BJ (cell line): ENCODE measurements at regions of chr5 and their contacts with region 1.

Region 1: DNA sequence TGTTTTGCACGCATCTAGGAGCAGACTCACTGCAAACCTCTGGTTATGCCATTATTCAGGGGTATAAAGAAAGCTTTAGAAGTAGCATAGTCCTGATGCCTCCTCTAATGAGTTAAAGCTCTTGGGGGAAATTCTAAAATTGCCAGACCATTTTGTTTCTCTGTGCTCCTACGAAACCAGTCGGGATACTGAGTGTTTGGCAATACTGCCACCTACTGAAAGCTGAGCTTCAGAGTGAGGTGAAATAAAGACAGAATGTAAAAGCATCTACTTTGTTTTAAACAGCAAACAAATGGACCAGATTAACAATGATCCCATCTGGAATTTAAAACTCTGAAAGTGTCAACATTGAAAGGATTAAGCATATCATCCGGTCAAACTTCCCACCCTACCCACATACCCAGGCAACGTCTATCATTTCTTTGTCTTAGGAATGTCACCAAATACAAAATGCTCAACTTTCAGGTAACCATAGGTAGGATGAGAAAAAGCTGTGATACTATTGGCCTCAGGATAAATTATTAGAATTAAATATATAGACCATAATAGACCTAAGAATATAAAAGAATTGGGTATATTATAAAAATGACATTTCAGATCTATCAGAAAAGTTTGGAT is 77.8 kb upstream of the SHISAL2B start:
- DNase-seq: no peak
- H3K4me3 ChIP-seq: no peak overlapping the region
- H3K27me3 ChIP-seq: peaks cover 4% of the 10 kb centered on the region
- CTCF ChIP-seq: peak; percentile 82

Region 2: DNA sequence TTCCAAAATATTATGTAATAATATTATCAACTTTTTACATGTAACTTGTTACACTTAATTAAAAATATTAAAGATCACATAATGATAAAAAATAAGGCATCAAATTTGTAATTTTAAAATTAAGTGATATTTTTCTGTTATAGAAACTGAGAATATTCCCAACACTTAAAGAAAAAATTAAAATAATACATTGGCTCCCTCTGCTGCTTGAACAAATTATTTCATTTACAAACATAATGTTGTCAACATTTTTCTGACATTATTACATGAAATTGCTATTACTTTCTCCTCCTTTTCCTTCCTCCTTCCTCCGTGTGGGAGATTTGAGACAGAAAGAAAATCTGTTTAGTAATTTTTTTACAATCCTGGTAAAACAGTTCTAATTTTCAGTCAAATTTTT is 404.5 kb before region 1 on chr5:
- CTCF ChIA-PET with region 1: interaction called, 19 read pairs
- POLR2A ChIA-PET with region 1: no interaction called
- DNase-seq: no peak
- H3K4me3 ChIP-seq: no peak overlapping the region
- H3K27me3 ChIP-seq: no peaks in the 10 kb centered on the region
- CTCF ChIP-seq: no peak

Region 3: GRCh38 chr5:64229163-64229774 is 383.2 kb before region 1 on chr5:
- CTCF ChIA-PET with region 1: interaction called, 138 read pairs
- POLR2A ChIA-PET with region 1: no interaction called
- DNase-seq: no peak
- H3K4me3 ChIP-seq: no peak overlapping the region
- H3K27me3 ChIP-seq: no peaks in the 10 kb centered on the region
- CTCF ChIP-seq: peak; percentile 56

Region 4: GRCh38 chr5:64622991-64623390 is 10.5 kb after region 1 on chr5:
- CTCF ChIA-PET with region 1: interaction called, 20 read pairs
- POLR2A ChIA-PET with region 1: no interaction called
- DNase-seq: no peak
- H3K4me3 ChIP-seq: no peak overlapping the region
- H3K27me3 ChIP-seq: peaks cover 2% of the 10 kb centered on the region
- CTCF ChIP-seq: no peak

Region 5: DNA sequence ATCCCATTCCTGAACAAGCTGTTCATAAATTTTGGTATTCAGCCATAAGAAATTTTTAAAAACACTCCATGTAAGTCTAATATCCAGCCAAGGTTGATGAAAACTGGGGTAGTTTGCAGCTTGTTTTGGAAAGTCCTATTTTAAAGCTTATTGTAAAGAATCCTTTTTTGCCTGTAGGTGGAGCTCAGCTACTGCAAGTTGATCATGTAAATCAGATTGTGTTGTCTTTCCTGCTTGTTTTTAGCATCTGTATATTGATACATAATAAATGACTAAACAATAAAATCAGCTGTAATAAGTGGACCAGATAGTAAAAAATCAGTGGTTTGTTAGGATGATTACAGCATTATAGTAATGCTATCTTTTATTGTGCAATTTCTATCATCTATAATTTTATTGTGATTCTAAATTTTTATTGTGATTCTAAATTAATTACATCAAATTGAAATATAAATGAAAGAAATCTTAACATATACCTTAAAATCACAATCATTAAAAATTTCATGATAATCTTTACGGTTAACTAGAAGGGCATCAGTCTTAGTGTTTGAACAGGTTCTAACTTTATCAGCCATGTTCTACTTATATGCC is 198.7 kb after region 1 on chr5:
- CTCF ChIA-PET with region 1: no interaction called
- POLR2A ChIA-PET with region 1: no interaction called
- DNase-seq: peak; percentile 9
- H3K4me3 ChIP-seq: no peak overlapping the region
- H3K27me3 ChIP-seq: no peaks in the 10 kb centered on the region
- CTCF ChIP-seq: peak; percentile 67